GM13977 (cell line): ENCODE measurements at regions of chr14 and their contacts with region 1.

Region 1: DNA sequence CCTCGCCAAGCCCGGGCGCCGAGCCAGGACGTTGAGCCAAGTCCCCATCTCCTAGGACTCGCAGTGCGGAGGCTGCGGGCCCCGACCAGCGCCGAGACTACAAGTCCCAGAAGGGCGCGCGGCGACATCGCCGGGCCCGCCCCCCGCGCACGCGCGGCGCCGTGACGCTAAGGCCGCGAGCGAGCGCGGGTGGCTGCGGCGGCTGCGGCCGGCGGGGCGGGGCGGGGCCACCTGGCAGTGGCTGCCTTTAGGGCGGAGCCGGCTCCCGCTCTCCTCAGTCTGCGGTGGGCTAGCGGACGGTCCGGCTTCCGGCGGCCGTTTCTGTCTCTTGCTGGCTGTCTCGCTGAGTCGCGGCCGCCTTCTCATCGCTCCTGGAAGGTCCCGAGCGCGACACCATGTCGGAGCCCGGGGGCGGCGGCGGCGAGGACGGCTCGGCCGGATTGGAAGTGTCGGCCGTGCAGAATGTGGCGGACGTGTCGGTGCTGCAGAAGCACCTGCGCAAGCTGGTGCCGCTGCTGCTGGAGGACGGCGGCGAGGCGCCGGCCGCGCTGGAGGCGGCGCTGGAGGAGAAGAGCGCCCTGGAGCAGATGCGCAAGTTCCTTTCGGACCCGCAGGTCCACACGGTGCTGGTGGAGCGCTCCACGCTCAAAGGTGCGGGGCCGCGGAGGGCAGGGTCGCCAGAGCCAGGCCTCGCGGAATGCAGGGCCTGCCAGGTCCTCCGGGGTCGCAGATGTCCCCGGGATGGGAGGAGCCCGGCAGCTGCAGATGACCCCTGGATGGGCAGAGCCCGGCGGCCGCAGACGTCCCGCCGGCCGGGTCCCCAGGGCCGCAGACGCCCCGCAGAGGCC is at the start of gene DYNC1H1:
- DNase-seq: peak; percentile 96
- CTCF ChIP-seq: no peak

Region 2: GRCh38 chr14:102096214-102097114 is 131.9 kb after region 1 on chr14:
- in situ Hi-C with region 1: loop called (anchors 10 kb)
- DNase-seq: peak; percentile 60
- CTCF ChIP-seq: peak; percentile 79

Region 3: GRCh38 chr14:102316743-102317563 is 352.4 kb after region 1 on chr14:
- in situ Hi-C with region 1: loop called (anchors 25 kb)
- DNase-seq: peak; percentile 94
- CTCF ChIP-seq: peak; percentile 91